ENCODE measurements at regions of chr19 and their contacts with region 1.

Region 1: GRCh38 chr19:3365836-3366752 is at the start of gene NFIC:
- DNase-seq: peak; percentile 70 to 80 (median 76)
- ATAC-seq: peak; percentile 72
- H3K4me3 ChIP-seq: peak within 1 kb of the TSS; percentile 40
- H3K4me1 ChIP-seq: peaks cover 8% of the 10 kb centered on the region
- CTCF ChIP-seq: no peak
- total RNA-seq, gene NFIC: 38.4 to 210 (median 79.3) TPM

Region 2: GRCh38 chr19:3429581-3430080 is 63.5 kb after region 1 on chr19:
- intact Hi-C with region 1: loop called in 1 of 2 experiments (anchors 10 kb)
- DNase-seq: peak; percentile 85 to 89 (median 87)
- ATAC-seq: peak; percentile 88
- H3K4me3 ChIP-seq: no peak overlapping the region
- H3K4me1 ChIP-seq: peaks cover 15% of the 10 kb centered on the region
- CTCF ChIP-seq: peak; percentile 96

Region 3: GRCh38 chr19:3440082-3440481 is 74.0 kb after region 1 on chr19:
- intact Hi-C with region 1: no loop called
- DNase-seq: peak in 2 of 3 donors; percentile 74 to 76
- ATAC-seq: peak; percentile 71
- H3K4me3 ChIP-seq: no peak overlapping the region
- H3K4me1 ChIP-seq: peaks cover 3% of the 10 kb centered on the region
- CTCF ChIP-seq: peak; percentile 43